Left colon (tissue), 2 donors: ENCODE measurements at regions of chr11 and their contacts with region 1.

Region 1: GRCh38 chr11:73393479-73394380 is 17.5 kb downstream of the RELT start:
- DNase-seq: peak; percentile 62 to 82
- ATAC-seq: peak; percentile 87

Region 2: DNA sequence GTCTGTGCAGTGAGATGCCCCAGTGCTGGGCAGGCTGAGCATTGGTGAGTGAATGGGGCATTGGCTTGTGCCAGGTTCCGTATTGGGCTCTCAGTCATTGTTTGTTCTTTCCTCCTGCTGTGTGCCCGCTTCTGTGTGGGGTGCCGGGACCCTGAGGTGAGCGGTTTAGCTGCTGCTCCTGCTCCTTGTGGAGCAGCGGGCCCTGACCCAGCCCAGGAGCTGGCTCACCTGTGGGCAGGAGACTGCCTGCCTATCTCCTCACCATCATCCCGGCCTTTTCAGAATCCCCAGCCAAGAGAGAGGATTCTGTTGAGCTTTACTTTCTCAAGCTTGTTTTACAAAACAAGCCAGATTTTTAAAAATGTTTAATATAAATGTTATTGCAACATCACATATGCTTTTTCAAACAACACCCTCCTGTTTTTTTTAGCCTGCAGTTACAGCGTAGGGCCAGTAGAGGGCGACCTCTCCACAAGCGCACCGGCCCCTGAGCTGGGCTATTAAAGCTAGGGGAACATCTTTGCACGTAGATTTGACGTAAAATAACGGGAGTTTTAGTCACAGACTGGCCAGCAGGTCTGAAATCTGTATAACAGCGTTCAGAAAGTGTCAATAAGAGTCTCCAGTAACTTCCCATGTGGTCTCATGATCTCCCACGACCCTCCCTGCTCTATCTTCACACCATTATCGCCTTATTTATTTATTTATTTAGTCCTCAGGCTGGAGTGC is 42.7 kb before region 1 on chr11:
- intact Hi-C with region 1: loop called in 1 of 2 experiments (anchors 2 kb)
- DNase-seq: peak in 1 of 2 donors; percentile 47
- ATAC-seq: peak; percentile 67

Region 3: GRCh38 chr11:73752216-73752867 is 358.6 kb after region 1 on chr11:
- intact Hi-C with region 1: no loop called
- DNase-seq: no peak
- ATAC-seq: no peak